A673 (cell line): ENCODE measurements at regions of chr7 and their contacts with region 1.

Region 1: GRCh38 chr7:17298207-17298839 is at the start of gene AHR:
- DNase-seq: peak; percentile 95
- H3K4me3 ChIP-seq: peak within 1 kb of the TSS; percentile 76
- H3K27ac ChIP-seq: no peak within 1 kb of the TSS
- H3K4me1 ChIP-seq: peaks cover 17% of the 10 kb centered on the region
- H3K27me3 ChIP-seq: peaks cover 23% of the 10 kb centered on the region
- CTCF ChIP-seq: no peak
- total RNA-seq, gene AHR: 11.8 and 13.5 TPM in 2 replicates

Region 2: GRCh38 chr7:16926283-16926682 is 372.0 kb before region 1 on chr7:
- CTCF ChIA-PET with region 1: interaction called, 4 read pairs
- POLR2A ChIA-PET with region 1: no interaction called
- intact Hi-C with region 1: loop called (anchors 10 kb)
- DNase-seq: peak; percentile 72
- H3K4me3 ChIP-seq: no peak overlapping the region
- H3K27ac ChIP-seq: no peak overlapping the region
- H3K4me1 ChIP-seq: peaks cover 28% of the 10 kb centered on the region
- H3K27me3 ChIP-seq: no peaks in the 10 kb centered on the region
- CTCF ChIP-seq: peak; percentile 85

Region 3: GRCh38 chr7:17041324-17041723 is 257.0 kb before region 1 on chr7:
- CTCF ChIA-PET with region 1: no interaction called
- POLR2A ChIA-PET with region 1: no interaction called
- intact Hi-C with region 1: loop called (anchors 2 kb)
- DNase-seq: peak; percentile 97
- H3K4me3 ChIP-seq: peak overlapping the region; percentile 9
- H3K27ac ChIP-seq: peak overlapping the region; percentile 96
- H3K4me1 ChIP-seq: peaks cover 81% of the 10 kb centered on the region
- H3K27me3 ChIP-seq: no peaks in the 10 kb centered on the region
- CTCF ChIP-seq: no peak

Region 4: DNA sequence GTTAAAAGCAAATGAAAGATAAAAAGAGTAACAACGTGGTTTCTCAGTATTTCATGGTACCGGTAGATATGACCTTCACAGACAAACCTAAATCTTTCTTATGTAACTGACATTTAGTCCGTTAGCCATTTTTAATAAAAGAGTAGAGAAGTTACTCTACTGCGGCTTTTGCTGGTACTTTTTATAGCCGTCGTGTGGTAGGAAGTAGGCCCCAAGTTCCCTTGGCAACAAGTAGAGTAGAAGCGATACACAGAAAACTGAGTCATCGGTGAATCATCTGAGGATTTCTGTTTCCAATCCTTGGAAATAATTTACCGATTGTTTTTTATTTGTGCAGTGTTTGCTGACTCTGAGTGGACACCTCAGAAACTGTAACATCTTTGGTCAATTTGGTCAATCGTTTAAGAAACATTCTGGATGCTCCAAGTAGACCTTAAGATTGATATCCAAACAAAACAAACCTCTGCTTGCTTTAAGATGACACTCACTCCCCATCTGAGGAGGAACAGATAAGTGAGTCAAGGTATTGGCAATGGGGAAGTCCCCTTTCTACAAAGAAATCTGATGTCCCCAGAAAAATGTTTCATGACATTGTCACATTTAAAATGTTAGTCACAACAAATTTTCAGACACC is 63.8 kb before region 1 on chr7:
- CTCF ChIA-PET with region 1: no interaction called
- POLR2A ChIA-PET with region 1: no interaction called
- intact Hi-C with region 1: no loop called
- DNase-seq: peak; percentile 71
- H3K4me3 ChIP-seq: no peak overlapping the region
- H3K27ac ChIP-seq: no peak overlapping the region
- H3K4me1 ChIP-seq: peaks cover 11% of the 10 kb centered on the region
- H3K27me3 ChIP-seq: no peaks in the 10 kb centered on the region
- CTCF ChIP-seq: no peak

Region 5: GRCh38 chr7:17646253-17646956 is 348.1 kb after region 1 on chr7:
- CTCF ChIA-PET with region 1: no interaction called
- POLR2A ChIA-PET with region 1: no interaction called
- intact Hi-C with region 1: loop called (anchors 2 kb)
- DNase-seq: peak; percentile 34
- H3K4me3 ChIP-seq: no peak overlapping the region
- H3K27ac ChIP-seq: no peak overlapping the region
- H3K4me1 ChIP-seq: no peaks in the 10 kb centered on the region
- H3K27me3 ChIP-seq: no peaks in the 10 kb centered on the region
- CTCF ChIP-seq: peak; percentile 54; the same call in 1 of the 2 replicates